WTC11 (cell line): ENCODE measurements at regions of chr2 and their contacts with region 1.

Region 1: GRCh38 chr2:98311721-98312120 is 34.5 kb upstream of the CNGA3 start:
- DNase-seq: peak; percentile 62
- ATAC-seq: peak; percentile 37
- H3K4me3 Mint-ChIP-seq: no peak overlapping the region
- H3K27ac Mint-ChIP-seq: no peak overlapping the region
- H3K4me1 Mint-ChIP-seq: peaks cover 19% of the 10 kb centered on the region
- H3K27me3 Mint-ChIP-seq: 0 out of 2 replicates have a peak, but pooled peaks cover 2% of the 10 kb centered on the region
- CTCF ChIP-seq: peak; percentile 23; the same call in 1 of the 2 replicates

Region 2: DNA sequence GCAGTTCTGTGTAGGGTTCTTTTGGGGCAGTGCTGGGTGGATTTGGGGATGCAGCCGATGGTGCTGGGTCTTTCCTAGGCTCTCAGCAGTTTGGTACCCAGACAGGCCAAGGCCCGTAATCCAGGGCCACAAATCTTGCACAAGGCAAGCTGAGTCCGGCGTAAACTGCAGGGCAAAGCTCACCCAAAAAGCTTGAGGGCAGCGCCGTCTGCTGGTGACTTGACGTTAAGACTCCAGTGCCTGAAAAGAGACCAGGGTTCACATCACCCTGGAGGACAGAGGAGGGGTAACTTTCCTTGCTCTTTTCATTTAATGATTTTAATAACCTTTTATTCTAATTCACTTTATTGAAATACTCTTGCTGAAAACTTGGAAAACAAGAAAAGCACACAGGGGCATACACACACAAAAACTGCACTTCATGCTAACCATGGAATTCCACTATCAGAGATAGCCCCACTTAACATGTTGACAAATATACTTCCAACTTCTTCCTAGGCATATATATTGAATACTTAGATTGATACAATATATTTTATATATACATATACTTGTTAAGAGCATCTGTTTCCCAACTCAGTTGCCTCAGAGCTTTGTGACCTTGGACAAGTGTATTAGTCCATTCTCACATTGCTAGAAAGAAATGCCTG is 73.5 kb after region 1 on chr2:
- CTCF ChIA-PET with region 1: interaction called, 11 read pairs
- POLR2A ChIA-PET with region 1: no interaction called
- DNase-seq: peak; percentile 87
- ATAC-seq: peak; percentile 88
- H3K4me3 Mint-ChIP-seq: no peak overlapping the region
- H3K27ac Mint-ChIP-seq: no peak overlapping the region
- H3K4me1 Mint-ChIP-seq: peaks cover 15% of the 10 kb centered on the region
- H3K27me3 Mint-ChIP-seq: peaks cover 5% of the 10 kb centered on the region; the same call in 1 of the 2 replicates
- CTCF ChIP-seq: peak; percentile 94